ENCODE measurements at regions of chrX and their contacts with region 1.

Region 1: GRCh38 chrX:46554942-46555341 is 9.7 kb upstream of the ZNF674 start:
- DNase-seq: peak in 1 of 35 experiments; percentile 28
- ATAC-seq: no peak
- H3K4me3 ChIP-seq: no peak overlapping the region
- H3K4me3 Mint-ChIP-seq: no peak overlapping the region
- H3K27ac ChIP-seq: no peak overlapping the region
- H3K27ac Mint-ChIP-seq: no peak overlapping the region
- H3K4me1 ChIP-seq: no peaks in the 10 kb centered on the region
- H3K4me1 Mint-ChIP-seq: no peaks in the 10 kb centered on the region
- H3K27me3 ChIP-seq: no peaks in the 10 kb centered on the region
- H3K27me3 Mint-ChIP-seq: peaks cover 0 to 8% of the 10 kb centered on the region in 2 donors

Region 2: GRCh38 chrX:46588263-46588662 is 33.3 kb after region 1 on chrX:
- CTCF ChIA-PET with region 1: no interaction called
- POLR2A ChIA-PET with region 1: no interaction called
- DNase-seq: peak in 31 of 35 experiments; percentile 4 to 59 (median 33)
- ATAC-seq: peak; percentile 52 to 80 (median 64)
- H3K4me3 ChIP-seq: peak overlapping the region; percentile 10 to 18
- H3K4me3 Mint-ChIP-seq: peak overlapping the region; percentile 59 to 69 (median 67)
- H3K27ac ChIP-seq: peak overlapping the region; percentile 66
- H3K27ac Mint-ChIP-seq: peak overlapping the region; percentile 93
- H3K4me1 ChIP-seq: peaks cover 2 to 27% of the 10 kb centered on the region in 2 experiments
- H3K4me1 Mint-ChIP-seq: peaks cover 28 to 54% (median 44%) of the 10 kb centered on the region in 3 donors
- H3K27me3 ChIP-seq: no peaks in the 10 kb centered on the region
- H3K27me3 Mint-ChIP-seq: no peaks in the 10 kb centered on the region

Region 3: GRCh38 chrX:46642145-46642544 is 87.2 kb after region 1 on chrX:
- CTCF ChIA-PET with region 1: interaction called, 5 to 10 read pairs
- POLR2A ChIA-PET with region 1: no interaction called
- DNase-seq: peak in 3 of 35 experiments; percentile 4 to 47 (median 11)
- ATAC-seq: peak; percentile 40 to 75 (median 72)
- H3K4me3 ChIP-seq: no peak overlapping the region
- H3K4me3 Mint-ChIP-seq: no peak overlapping the region
- H3K27ac ChIP-seq: no peak overlapping the region
- H3K27ac Mint-ChIP-seq: no peak overlapping the region
- H3K4me1 ChIP-seq: no peaks in the 10 kb centered on the region
- H3K4me1 Mint-ChIP-seq: peaks cover 0 to 8% (median 5%) of the 10 kb centered on the region in 3 donors
- H3K27me3 ChIP-seq: no peaks in the 10 kb centered on the region
- H3K27me3 Mint-ChIP-seq: no peaks in the 10 kb centered on the region